CD14-positive monocyte (primary cell): ENCODE measurements at regions of chr11 and their contacts with region 1.

Region 1: DNA sequence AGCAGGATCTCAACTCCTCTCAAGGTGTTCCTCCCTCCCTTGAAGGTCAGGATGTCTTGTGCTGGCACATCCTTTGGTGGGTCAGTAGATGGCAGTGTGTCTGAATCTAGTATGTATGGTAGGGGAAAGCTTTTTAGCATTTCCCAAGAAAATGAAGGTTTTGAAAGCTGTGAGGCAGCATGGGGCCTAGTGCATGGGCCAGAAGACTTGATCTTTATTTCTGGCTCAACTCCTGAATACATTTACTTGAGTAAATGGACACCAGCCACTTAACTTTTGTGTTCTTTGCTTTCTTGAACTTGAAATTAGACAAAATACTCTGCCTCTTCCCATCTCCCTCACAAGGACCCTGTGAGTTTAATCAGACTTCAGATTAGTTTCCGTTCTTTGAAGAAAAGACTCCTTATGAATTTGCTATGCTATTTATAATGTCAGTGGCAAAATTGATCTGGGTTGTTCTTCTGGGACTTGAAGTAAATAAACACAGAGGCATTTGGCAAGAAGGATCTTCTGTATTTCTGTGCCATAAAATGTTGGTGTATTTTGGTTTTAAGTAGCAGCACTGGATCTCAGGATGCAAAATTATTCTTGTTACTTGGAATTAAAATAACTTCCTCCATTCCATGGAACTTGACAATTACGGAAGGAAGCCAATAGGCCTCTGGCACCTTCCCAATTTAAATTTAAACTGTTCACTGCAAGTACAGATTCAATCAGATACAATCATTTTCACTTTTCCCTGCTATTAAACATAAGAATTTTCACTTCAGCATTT is 288.8 kb downstream of the CASP12 start:
- DNase-seq: peak; percentile 29 to 56 (median 44)
- H3K4me3 ChIP-seq: no peak overlapping the region
- H3K4me3 Mint-ChIP-seq: no peak overlapping the region
- H3K27ac ChIP-seq: peak overlapping the region in 1 of 2 donors; percentile 25
- H3K27ac Mint-ChIP-seq: peak overlapping the region in 2 of 7 donors; percentile 5 to 38
- H3K4me1 ChIP-seq: peaks cover 7 to 10% of the 10 kb centered on the region in 2 donors
- H3K4me1 Mint-ChIP-seq: peaks cover 11% of the 10 kb centered on the region
- H3K27me3 ChIP-seq: no peaks in the 10 kb centered on the region
- H3K27me3 Mint-ChIP-seq: no peaks in the 10 kb centered on the region
- CTCF ChIP-seq: peak; percentile 78

Region 2: DNA sequence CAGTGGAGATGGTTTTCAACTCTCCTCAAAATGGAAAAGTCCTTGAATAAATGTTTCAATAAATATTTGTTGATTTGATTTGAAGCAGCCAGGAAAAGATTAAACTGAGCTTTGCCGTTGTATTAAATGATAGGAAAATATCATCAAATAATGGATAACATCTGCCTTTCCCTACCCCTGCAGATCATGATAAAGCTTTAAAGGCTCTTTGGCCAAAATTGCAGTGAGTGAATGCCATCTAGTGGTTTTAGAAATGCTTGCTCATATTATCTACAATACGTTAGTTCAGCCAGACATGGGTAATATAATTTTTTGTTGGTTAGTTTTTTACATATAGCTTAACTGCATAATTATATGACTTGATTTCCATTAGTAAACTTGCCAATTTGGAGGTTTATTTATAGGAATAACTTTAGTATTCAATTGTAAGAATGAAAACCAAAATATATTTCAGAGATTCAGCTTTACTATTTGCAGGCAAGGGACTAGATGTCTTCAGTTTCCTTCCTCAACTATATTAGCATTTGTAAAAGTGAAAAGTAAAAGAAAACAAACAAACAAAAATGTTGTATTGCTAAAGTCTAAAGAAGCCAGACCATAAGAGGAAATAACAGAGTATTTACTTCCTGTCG is 1253.4 kb after region 1 on chr11:
- intact Hi-C with region 1: loop called in 1 of 2 experiments (anchors 10 kb)
- DNase-seq: peak; percentile 3 to 51 (median 22)
- H3K4me3 ChIP-seq: no peak overlapping the region
- H3K4me3 Mint-ChIP-seq: no peak overlapping the region
- H3K27ac ChIP-seq: no peak overlapping the region
- H3K27ac Mint-ChIP-seq: no peak overlapping the region
- H3K4me1 ChIP-seq: no peaks in the 10 kb centered on the region
- H3K4me1 Mint-ChIP-seq: no peaks in the 10 kb centered on the region
- H3K27me3 ChIP-seq: no peaks in the 10 kb centered on the region
- H3K27me3 Mint-ChIP-seq: peaks cover 0 to 1% (median 0%) of the 10 kb centered on the region in 3 donors
- CTCF ChIP-seq: peak; percentile 77